CD8-positive, alpha-beta memory T cell (primary cell): ENCODE measurements at regions of chr3 and their contacts with region 1.

Region 1: GRCh38 chr3:114408736-114409670 is 115.2 kb downstream of the TIGIT start:
- DNase-seq: no peak
- H3K4me3 ChIP-seq: no peak overlapping the region
- H3K4me3 Mint-ChIP-seq: no peak overlapping the region
- H3K27ac ChIP-seq: no peak overlapping the region
- H3K27ac Mint-ChIP-seq: no peak overlapping the region
- H3K4me1 ChIP-seq: no peaks in the 10 kb centered on the region
- H3K4me1 Mint-ChIP-seq: peaks cover 2 to 22% (median 14%) of the 10 kb centered on the region in 3 donors
- H3K27me3 ChIP-seq: no peaks in the 10 kb centered on the region
- H3K27me3 Mint-ChIP-seq: no peaks in the 10 kb centered on the region

Region 2: DNA sequence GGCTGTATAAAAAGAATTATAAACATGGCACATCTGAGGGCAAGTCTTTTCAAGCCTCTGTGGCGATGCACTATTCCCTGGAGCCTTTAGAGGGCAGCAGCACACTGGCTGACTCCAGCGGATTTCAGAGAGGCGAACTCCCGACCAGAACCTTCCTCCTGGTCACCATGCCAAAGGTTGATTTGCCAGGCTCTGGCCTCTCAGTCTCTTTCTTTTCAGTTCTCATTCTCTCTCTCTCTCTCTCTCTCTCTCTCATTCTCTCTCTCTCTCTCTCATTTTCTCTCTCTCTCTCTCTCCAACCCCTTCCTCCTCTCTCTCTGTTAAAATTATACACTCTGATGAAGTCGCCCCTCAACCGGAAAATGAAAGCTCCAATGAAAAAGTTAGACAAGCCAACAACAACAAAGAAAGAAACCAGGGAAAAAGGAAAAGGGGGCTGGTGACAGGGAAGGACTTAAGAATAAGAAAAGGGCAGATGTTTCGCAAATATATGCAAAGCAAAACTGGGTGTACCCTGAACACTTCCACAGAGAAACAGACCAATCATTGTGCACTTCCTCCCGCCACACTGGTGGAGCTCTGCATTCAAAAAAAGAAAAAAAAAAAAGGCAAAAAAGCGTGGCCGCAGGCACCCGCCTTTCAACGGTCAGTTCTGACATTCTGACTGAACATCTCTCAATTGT is 25.0 kb before region 1 on chr3:
- CTCF ChIA-PET with region 1: interaction called, 11 read pairs
- POLR2A ChIA-PET with region 1: interaction called, 3 read pairs
- DNase-seq: peak; percentile 38 to 72 (median 47)
- H3K4me3 ChIP-seq: peak overlapping the region; percentile 39
- H3K4me3 Mint-ChIP-seq: peak overlapping the region in 4 of 7 donors; percentile 68 to 90 (median 82)
- H3K27ac ChIP-seq: no peak overlapping the region
- H3K27ac Mint-ChIP-seq: peak overlapping the region in 5 of 8 donors; percentile 1 to 94 (median 48)
- H3K4me1 ChIP-seq: peaks cover 7% of the 10 kb centered on the region
- H3K4me1 Mint-ChIP-seq: peaks cover 9 to 18% (median 15%) of the 10 kb centered on the region in 3 donors
- H3K27me3 ChIP-seq: no peaks in the 10 kb centered on the region
- H3K27me3 Mint-ChIP-seq: no peaks in the 10 kb centered on the region